Mammary epithelial cell (primary cell): ENCODE measurements at regions of chr12 and their contacts with region 1.

Region 1: DNA sequence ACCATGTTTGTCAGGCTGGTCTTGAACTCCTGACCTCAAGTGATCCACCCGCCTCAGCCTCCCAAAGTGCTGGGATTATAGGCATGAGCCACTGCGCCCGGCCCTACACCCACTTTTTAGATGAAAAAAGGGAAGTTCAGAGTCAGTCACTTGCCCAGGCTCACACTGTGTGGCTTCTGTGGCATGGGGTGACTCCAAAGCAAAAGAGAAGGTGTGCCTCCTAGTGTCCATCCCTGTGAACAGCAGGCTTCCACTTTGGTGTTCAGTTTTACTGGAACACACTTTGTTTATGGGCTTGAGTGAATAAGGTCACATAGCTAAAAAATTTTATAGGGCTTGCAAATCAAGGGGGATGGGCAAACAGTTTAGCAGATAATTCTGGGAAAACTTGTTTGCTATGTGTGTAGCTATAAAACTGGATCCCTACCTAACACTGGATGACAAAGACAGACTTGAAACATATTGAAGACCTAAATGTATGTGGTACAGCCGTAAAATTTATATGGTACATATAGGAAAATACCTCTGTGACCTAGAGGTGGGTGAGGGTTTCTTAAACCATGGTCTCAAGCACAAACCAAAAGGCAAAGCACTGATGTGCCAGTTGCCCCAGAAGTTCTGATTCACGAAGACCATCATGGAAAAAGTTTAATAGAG is 54.9 kb downstream of the EID3 start:
- DNase-seq: peak; percentile 40
- H3K4me3 ChIP-seq: no peak overlapping the region
- H3K27ac ChIP-seq: no peak overlapping the region
- H3K4me1 ChIP-seq: no peaks in the 10 kb centered on the region
- H3K27me3 ChIP-seq: no peaks in the 10 kb centered on the region
- CTCF ChIP-seq: peak; percentile 86 to 88

Region 2: GRCh38 chr12:103241184-103241583 is 1117.3 kb before region 1 on chr12:
- CTCF ChIA-PET with region 1: no interaction called
- dilution Hi-C with region 1: no loop called
- in situ Hi-C with region 1: no loop called
- intact Hi-C with region 1: no loop called
- DNase-seq: no peak
- H3K4me3 ChIP-seq: no peak overlapping the region
- H3K27ac ChIP-seq: no peak overlapping the region
- H3K4me1 ChIP-seq: no peaks in the 10 kb centered on the region
- H3K27me3 ChIP-seq: no peaks in the 10 kb centered on the region
- CTCF ChIP-seq: no peak

Region 3: DNA sequence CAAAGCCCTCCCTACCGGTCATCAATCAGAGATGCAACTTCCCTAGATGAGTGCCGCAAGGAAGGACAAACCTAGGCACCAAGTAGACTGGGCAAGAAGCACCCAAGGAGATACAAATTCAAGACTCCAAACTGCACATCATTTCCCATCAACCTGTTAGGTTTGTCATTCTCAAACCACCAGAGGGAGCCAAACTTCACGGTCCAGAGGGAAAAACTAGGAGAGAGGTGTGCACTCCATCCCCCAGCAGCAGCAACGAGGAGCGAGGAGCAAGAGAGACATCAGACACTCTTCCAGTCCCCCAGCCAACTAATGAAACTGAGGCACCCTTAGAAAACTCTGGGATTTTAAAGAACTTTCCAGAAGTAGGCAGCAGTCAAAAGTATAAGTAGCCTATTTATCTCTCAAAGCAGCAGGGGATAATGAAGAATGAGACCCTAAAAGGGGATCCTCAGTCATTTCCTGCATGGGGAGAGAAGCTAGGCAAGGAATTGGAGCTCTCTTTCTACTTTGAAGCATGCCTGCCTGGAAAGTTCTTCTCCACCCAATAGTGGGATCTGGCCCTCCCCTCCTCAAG is 480.5 kb before region 1 on chr12:
- CTCF ChIA-PET with region 1: no interaction called
- dilution Hi-C with region 1: no loop called
- in situ Hi-C with region 1: no loop called
- intact Hi-C with region 1: loop called (anchors 5 kb)
- DNase-seq: peak; percentile 72
- H3K4me3 ChIP-seq: no peak overlapping the region
- H3K27ac ChIP-seq: no peak overlapping the region
- H3K4me1 ChIP-seq: peaks cover 27% of the 10 kb centered on the region
- H3K27me3 ChIP-seq: no peaks in the 10 kb centered on the region
- CTCF ChIP-seq: peak; percentile 82 to 86

Region 4: DNA sequence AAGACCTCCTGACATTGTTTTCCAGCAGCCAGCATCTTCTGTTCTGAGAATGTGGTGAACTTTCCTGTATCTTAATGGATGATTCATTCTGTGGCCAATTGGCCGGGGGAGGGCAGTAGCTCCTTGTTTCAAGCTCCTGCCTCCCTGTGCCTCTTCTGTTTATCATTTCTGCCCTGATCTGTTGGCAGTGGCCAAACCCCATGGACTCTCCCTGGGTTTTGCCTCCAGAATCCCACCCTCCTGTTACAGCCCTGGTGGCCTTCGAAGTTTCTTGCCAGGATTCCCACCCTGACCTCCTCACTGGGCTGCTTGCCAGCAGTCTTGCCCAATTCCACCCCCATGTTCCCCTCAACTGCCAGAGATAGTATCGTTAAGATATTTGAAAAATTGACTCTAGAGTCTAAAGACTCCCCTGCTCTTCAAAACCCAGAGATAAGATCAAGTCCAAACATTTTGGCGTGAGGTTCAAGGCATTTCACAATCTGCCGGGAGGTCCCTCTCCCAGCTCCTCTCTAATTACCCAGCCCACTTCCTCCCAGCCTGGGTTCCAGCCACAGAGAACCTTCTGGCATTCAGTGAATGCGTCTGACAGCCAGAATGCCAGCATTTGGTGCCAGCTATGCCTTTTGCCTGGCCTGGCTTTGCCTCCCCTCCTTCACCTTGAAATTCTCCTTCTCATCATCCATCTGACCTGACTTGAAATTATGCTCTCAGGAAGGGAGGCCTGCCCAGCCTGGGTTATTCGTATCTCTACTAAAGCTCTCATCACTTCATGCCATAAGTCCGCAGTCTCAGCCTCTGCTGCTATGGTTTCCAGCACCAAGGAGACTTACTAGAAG is 180.6 kb before region 1 on chr12:
- CTCF ChIA-PET with region 1: no interaction called
- dilution Hi-C with region 1: no loop called
- in situ Hi-C with region 1: no loop called
- intact Hi-C with region 1: loop called (anchors 1 kb)
- DNase-seq: peak; percentile 88
- H3K4me3 ChIP-seq: no peak overlapping the region
- H3K27ac ChIP-seq: peak overlapping the region; percentile 5
- H3K4me1 ChIP-seq: peaks cover 36% of the 10 kb centered on the region
- H3K27me3 ChIP-seq: no peaks in the 10 kb centered on the region
- CTCF ChIP-seq: peak; percentile 42 to 61